Activated CD4-positive, alpha-beta T cell treated with anti-CD3 and anti-CD28 coated beads, Interleukin-2, amount 10 ng/mL, durations not matched to agents 24 days and 14 days (primary cell): ENCODE measurements at regions of chrX and their contacts with region 1.

Region 1: DNA sequence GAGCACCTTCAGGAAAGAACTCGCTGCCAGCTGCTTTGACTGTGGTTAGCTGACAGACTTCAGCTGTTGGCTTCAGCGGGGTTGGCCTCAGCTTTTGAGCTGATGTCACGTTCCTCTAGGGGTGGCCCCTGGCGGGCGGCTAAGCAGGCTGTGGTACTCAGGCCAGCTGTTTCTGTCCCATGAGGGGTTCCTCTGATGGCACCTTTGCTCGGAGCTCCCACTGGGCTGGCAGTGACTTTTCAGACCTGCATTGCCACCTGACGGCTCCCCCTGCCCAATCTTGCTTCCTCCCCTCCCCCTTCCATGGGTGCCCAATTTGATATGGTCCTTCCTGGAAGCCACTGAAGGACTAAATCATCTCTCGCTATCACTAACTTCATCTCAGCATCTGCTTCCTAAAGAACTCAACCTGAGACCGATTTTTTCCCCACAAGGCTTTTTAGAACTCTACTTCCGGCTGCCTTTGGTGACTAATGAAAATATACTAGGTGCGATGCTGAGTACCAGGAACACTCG is 519.3 kb downstream of the BCOR start:
- DNase-seq: peak; percentile 76
- H3K4me3 Mint-ChIP-seq: peak overlapping the region; percentile 60
- H3K27ac Mint-ChIP-seq: peak overlapping the region; percentile 91
- H3K4me1 Mint-ChIP-seq: peaks cover 23% of the 10 kb centered on the region
- H3K27me3 Mint-ChIP-seq: no peaks in the 10 kb centered on the region

Region 2: GRCh38 chrX:39196192-39197102 is 382.0 kb before region 1 on chrX:
- intact Hi-C with region 1: loop called (anchors 2 kb)
- DNase-seq: peak; percentile 85
- H3K4me3 Mint-ChIP-seq: peak overlapping the region; percentile 47
- H3K27ac Mint-ChIP-seq: peak overlapping the region; percentile 91
- H3K4me1 Mint-ChIP-seq: peaks cover 47% of the 10 kb centered on the region
- H3K27me3 Mint-ChIP-seq: no peaks in the 10 kb centered on the region

Region 3: GRCh38 chrX:39504850-39505259 is 73.6 kb before region 1 on chrX:
- intact Hi-C with region 1: loop called (anchors 10 kb)
- DNase-seq: no peak
- H3K4me3 Mint-ChIP-seq: no peak overlapping the region
- H3K27ac Mint-ChIP-seq: no peak overlapping the region
- H3K4me1 Mint-ChIP-seq: peaks cover 15% of the 10 kb centered on the region
- H3K27me3 Mint-ChIP-seq: no peaks in the 10 kb centered on the region

Region 4: GRCh38 chrX:39550795-39551361 is 27.5 kb before region 1 on chrX:
- intact Hi-C with region 1: loop called (anchors 1 kb)
- DNase-seq: no peak
- H3K4me3 Mint-ChIP-seq: no peak overlapping the region
- H3K27ac Mint-ChIP-seq: no peak overlapping the region
- H3K4me1 Mint-ChIP-seq: no peaks in the 10 kb centered on the region
- H3K27me3 Mint-ChIP-seq: no peaks in the 10 kb centered on the region

Region 5: DNA sequence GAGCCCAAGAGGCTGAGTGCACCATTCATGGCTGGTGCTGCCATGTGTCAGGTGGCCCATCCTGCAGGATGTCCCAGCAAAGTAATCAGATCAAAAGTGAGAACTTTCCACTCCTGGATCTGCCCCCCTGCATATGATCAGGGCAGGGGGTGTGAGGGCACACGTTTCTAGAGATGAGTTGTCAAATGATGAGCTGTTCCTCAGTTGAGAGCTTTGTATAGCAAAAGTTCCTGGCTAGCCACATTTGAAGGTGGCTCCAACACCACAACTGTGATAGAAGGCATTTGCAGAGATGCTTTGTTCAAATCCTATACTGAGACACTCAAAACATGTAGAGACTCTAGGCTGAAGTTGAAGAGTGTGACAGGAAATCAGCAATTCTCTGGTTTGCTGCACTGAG is 17.6 kb after region 1 on chrX:
- intact Hi-C with region 1: loop called (anchors 2 kb)
- DNase-seq: no peak
- H3K4me3 Mint-ChIP-seq: no peak overlapping the region
- H3K27ac Mint-ChIP-seq: no peak overlapping the region
- H3K4me1 Mint-ChIP-seq: peaks cover 5% of the 10 kb centered on the region
- H3K27me3 Mint-ChIP-seq: no peaks in the 10 kb centered on the region

Region 6: GRCh38 chrX:39730662-39731397 is 152.4 kb after region 1 on chrX:
- intact Hi-C with region 1: no loop called
- DNase-seq: peak; percentile 85
- H3K4me3 Mint-ChIP-seq: peak overlapping the region; percentile 28
- H3K27ac Mint-ChIP-seq: peak overlapping the region; percentile 74
- H3K4me1 Mint-ChIP-seq: peaks cover 19% of the 10 kb centered on the region
- H3K27me3 Mint-ChIP-seq: no peaks in the 10 kb centered on the region